ENCODE measurements at regions of chr5 and their contacts with region 1.

Region 1: DNA sequence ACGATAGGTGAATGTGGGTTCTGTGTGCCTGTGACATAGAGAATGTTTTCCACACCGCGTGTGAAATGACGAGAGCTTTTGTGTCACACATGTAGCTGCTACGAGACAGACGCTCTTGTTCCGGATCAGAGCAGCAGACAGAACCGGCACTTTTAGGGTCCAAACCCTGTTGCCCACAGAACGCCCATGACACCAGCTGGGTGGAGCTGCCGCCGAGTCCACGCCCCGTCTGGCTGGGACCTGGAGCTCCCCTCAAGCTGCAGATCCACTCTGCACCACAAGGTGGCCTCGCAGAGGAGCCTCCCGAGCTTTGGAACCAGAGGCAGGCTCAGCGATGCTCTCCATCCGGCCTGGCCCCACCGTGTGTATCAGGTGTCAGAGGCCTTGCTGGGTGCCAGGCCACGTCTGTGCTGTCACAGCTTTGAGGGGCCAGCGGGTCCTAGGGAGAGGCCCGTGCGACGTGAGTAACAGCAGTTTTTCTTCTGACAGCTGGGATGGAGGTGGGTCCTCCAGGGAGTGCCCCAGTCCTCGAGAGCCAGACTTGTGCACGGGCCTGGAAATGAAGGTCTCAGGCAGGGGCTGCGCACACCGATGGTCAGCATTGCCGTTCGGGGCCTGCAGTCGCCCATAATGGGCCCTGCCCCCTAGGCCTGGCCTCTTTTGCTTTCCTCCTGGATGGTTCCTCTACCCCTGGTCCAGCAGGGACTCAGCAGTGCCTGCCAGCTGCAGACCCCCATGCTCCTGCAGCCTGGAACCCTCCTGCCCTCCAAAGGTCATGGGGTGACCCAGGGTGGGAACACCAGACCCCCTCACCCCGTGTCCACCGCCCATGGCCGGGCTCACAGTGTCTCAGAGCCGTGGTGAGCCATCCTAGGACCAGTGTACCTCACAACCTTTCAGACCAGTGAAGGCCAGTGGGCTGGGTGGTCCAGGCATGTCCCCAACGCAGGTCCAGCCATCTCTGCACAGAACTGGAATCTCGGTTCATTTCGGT is 2.5 kb upstream of the LRRC14B start:
- DNase-seq: peak; percentile 95
- H3K4me3 ChIP-seq: peak overlapping the region; percentile 43
- H3K27ac ChIP-seq: peak overlapping the region; percentile 85
- H3K4me1 ChIP-seq: peaks cover 58% of the 10 kb centered on the region
- CTCF ChIP-seq: peak; percentile 88

Region 2: GRCh38 chr5:199950-200645 is 11.3 kb after region 1 on chr5:
- CTCF ChIA-PET with region 1: interaction called, 5 read pairs
- POLR2A ChIA-PET with region 1: interaction called, 28 read pairs
- intact Hi-C with region 1: loop called (anchors 1 kb)
- DNase-seq: no peak
- H3K4me3 ChIP-seq: peak overlapping the region; percentile 51
- H3K27ac ChIP-seq: peak overlapping the region; percentile 93
- H3K4me1 ChIP-seq: peaks cover 57% of the 10 kb centered on the region
- CTCF ChIP-seq: no peak

Region 3: GRCh38 chr5:217860-218456 is 29.2 kb after region 1 on chr5 and contains the starts of genes CCDC127 and SDHA:
- CTCF ChIA-PET with region 1: interaction called, 8 read pairs
- POLR2A ChIA-PET with region 1: interaction called, 21 read pairs
- intact Hi-C with region 1: loop called (anchors 1 kb)
- DNase-seq: peak; percentile 96
- H3K4me3 ChIP-seq: peak within 1 kb of the TSS; percentile 94
- H3K27ac ChIP-seq: peak within 1 kb of the TSS; percentile 66
- H3K4me1 ChIP-seq: peaks cover 48% of the 10 kb centered on the region
- CTCF ChIP-seq: peak; percentile 77
- total RNA-seq, gene CCDC127: 6.0 and 10.8 TPM in 2 replicates
- total RNA-seq, gene SDHA: 147 and 151 TPM in 2 replicates

Region 4: GRCh38 chr5:270340-270739 is 81.6 kb after region 1 on chr5:
- CTCF ChIA-PET with region 1: interaction called, 3 read pairs
- POLR2A ChIA-PET with region 1: interaction called, 3 read pairs
- intact Hi-C with region 1: loop called (anchors 1 kb)
- DNase-seq: no peak
- H3K4me3 ChIP-seq: peak overlapping the region; percentile 97
- H3K27ac ChIP-seq: peak overlapping the region; percentile 69
- H3K4me1 ChIP-seq: peaks cover 19% of the 10 kb centered on the region
- CTCF ChIP-seq: no peak

Region 5: DNA sequence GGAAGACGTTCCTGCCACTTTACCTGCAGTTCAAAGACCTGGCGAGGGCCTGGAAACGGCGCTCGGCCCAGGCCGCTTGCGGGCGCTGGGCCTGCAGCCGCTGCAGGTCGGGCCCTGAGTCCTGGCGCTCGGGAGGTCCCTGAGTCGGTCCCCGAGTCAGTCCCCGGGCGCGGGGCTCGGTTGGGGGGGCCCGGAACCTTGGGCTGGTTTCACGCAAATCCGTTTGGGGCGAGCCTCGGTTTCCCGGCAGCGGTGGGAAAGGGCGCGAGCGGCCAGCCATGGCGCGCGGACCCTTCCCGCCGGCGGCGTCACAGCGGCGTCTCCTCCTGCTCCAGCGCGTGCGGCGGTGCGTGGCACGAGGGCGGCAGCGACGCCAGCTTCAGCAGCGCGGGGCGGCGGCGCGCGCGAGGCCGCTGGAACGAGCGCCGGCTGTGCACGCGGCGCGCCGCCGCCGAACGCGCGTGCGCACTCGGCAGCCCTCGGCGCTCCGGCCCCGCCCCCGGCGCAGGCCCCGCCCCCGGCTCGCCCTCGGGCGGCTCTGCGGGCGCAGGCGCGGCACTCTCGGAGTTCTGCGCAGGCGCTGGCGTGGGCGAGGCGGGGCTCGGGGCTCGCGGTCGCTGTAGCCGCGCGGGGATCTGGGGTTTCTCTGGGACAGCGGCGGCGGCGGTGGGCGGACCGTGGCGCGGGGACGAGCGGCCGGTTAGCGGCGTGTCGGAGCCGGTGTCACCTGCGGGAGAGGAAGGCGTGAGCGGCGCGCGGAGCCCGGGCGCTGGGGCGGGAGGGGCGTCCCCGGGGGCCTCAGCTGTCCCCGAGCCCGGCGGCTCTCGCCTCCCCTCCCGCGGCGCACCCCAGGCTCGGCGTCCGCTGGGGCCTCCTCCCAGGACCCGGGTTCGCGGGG is 284.1 kb after region 1 on chr5:
- CTCF ChIA-PET with region 1: interaction called, 10 read pairs
- POLR2A ChIA-PET with region 1: no interaction called
- intact Hi-C with region 1: no loop called
- DNase-seq: peak; percentile 91
- H3K4me3 ChIP-seq: peak overlapping the region; percentile 85
- H3K27ac ChIP-seq: peak overlapping the region; percentile 50
- H3K4me1 ChIP-seq: peaks cover 24% of the 10 kb centered on the region
- CTCF ChIP-seq: no peak